Body of pancreas (tissue), 4 donors: ENCODE measurements at regions of chr11 and their contacts with region 1.

Region 1: GRCh38 chr11:12122083-12122482 is 11.7 kb downstream of the MICAL2 start:
- DNase-seq: peak; percentile 47 to 68 (median 52)
- ATAC-seq: peak; percentile 69
- H3K4me3 ChIP-seq: no peak overlapping the region
- H3K27ac ChIP-seq: no peak overlapping the region
- H3K4me1 ChIP-seq: peaks cover 23% of the 10 kb centered on the region
- H3K27me3 ChIP-seq: no peaks in the 10 kb centered on the region
- CTCF ChIP-seq: peak; percentile 37 to 78 (median 55)
- POLR2A ChIP-seq: no peak

Region 2: GRCh38 chr11:11261629-11262028 is 860.5 kb before region 1 on chr11:
- intact Hi-C with region 1: no loop called
- DNase-seq: no peak
- ATAC-seq: no peak
- H3K4me3 ChIP-seq: no peak overlapping the region
- H3K27ac ChIP-seq: no peak overlapping the region
- H3K4me1 ChIP-seq: no peaks in the 10 kb centered on the region
- H3K27me3 ChIP-seq: no peaks in the 10 kb centered on the region
- CTCF ChIP-seq: no peak
- POLR2A ChIP-seq: no peak

Region 3: GRCh38 chr11:12235947-12236743 is 114.1 kb after region 1 on chr11:
- intact Hi-C with region 1: loop called (anchors 10 kb)
- DNase-seq: peak in 2 of 4 donors; percentile 36 to 42
- ATAC-seq: peak; percentile 51
- H3K4me3 ChIP-seq: no peak overlapping the region
- H3K27ac ChIP-seq: peak overlapping the region; percentile 12 to 55 (median 45)
- H3K4me1 ChIP-seq: peaks cover 31% of the 10 kb centered on the region
- H3K27me3 ChIP-seq: no peaks in the 10 kb centered on the region
- CTCF ChIP-seq: peak; percentile 5 to 84 (median 72)
- POLR2A ChIP-seq: no peak